Activated CD4-positive, alpha-beta memory T cell treated with anti-CD3 and anti-CD28 coated beads for 36 hours (primary cell): ENCODE measurements at regions of chr4 and their contacts with region 1.

Region 1: DNA sequence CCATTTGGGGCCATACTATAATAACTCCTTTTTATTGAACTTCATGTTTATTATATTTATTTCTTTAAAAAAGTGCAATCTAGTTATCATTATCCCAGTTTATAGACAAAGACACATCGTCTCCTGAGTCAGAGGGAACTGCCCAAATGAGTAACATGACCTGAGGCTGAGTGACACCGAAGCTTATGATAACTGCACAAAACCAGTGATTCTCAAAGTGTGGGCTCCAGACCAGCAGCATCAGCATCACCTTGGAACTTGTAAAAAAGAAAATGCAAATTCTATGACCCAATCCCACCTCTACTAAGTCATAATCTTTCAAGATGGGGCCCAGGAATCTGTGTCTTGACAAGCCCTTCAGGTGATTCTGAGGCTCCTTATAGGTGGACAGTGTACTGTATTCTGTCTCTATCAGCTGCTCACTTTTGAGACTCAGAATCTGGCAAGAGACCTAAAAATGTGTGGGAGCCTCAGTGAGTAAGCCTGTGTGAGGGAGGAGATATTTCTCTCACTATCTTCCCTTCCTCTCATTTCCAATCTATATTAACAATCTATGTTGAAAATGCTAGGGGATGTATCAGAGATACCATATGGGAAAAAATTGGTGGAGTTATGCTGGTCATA is 147.0 kb downstream of the PACRGL start:
- DNase-seq: no peak
- H3K4me3 Mint-ChIP-seq: no peak overlapping the region
- H3K27ac Mint-ChIP-seq: no peak overlapping the region
- H3K4me1 Mint-ChIP-seq: no peaks in the 10 kb centered on the region
- H3K27me3 Mint-ChIP-seq: no peaks in the 10 kb centered on the region

Region 2: GRCh38 chr4:20832826-20833225 is 14.4 kb before region 1 on chr4:
- CTCF ChIA-PET with region 1: no interaction called
- POLR2A ChIA-PET with region 1: no interaction called
- intact Hi-C with region 1: loop called (anchors 1 kb)
- DNase-seq: no peak
- H3K4me3 Mint-ChIP-seq: no peak overlapping the region
- H3K27ac Mint-ChIP-seq: no peak overlapping the region
- H3K4me1 Mint-ChIP-seq: no peaks in the 10 kb centered on the region
- H3K27me3 Mint-ChIP-seq: no peaks in the 10 kb centered on the region

Region 3: DNA sequence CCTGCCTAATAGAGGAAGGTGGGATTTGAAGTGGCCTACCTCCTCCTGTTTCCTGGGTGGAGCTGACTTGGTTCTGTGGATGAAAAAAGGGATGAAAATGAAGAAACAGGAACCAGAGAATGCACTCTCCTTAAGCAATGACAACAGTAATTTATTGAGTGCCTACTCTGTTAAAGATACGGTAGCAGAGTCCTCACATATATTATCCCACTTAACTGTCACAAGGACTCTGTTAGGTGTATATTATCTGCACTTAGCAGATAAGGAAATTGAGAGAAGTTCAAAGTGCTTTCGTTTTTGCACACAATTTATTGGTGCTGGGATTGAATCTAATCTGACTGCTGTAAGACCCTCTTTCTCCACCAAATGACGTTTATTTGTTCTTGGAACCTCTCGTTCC is 154.3 kb after region 1 on chr4:
- CTCF ChIA-PET with region 1: no interaction called
- POLR2A ChIA-PET with region 1: no interaction called
- intact Hi-C with region 1: no loop called
- DNase-seq: no peak
- H3K4me3 Mint-ChIP-seq: no peak overlapping the region
- H3K27ac Mint-ChIP-seq: no peak overlapping the region
- H3K4me1 Mint-ChIP-seq: peaks cover 4% of the 10 kb centered on the region
- H3K27me3 Mint-ChIP-seq: no peaks in the 10 kb centered on the region